ENCODE measurements at regions of chr10 and their contacts with region 1.

Region 1: DNA sequence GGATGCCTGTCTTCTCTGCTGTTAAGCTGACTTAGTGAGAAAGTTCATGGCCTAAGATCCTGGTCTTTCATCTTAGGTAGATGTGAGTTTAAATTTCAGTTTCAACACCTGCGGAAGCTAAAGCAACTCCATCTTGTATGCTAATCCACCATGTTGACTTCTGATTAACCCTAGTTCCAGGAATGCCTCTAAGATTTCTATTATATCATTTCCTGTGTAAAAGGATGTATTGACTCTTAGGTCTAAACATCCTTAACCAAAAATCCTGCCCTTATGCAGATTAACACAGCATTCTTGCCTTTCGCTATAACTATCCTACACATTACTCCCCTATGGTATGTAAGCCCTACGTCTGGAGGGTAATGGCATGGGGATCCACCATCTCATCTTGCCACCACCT is 94.4 kb upstream of the CCDC6 start:
- DNase-seq: peak; percentile 12
- H3K4me3 Mint-ChIP-seq: no peak overlapping the region
- H3K27ac Mint-ChIP-seq: peak overlapping the region; percentile 55
- H3K4me1 Mint-ChIP-seq: peaks cover 18% of the 10 kb centered on the region
- H3K27me3 Mint-ChIP-seq: peaks cover 3% of the 10 kb centered on the region

Region 2: GRCh38 chr10:59606551-59606961 is 394.2 kb before region 1 on chr10:
- CTCF ChIA-PET with region 1: no interaction called
- POLR2A ChIA-PET with region 1: no interaction called
- intact Hi-C with region 1: no loop called
- DNase-seq: no peak
- H3K4me3 Mint-ChIP-seq: no peak overlapping the region
- H3K27ac Mint-ChIP-seq: no peak overlapping the region
- H3K4me1 Mint-ChIP-seq: no peaks in the 10 kb centered on the region
- H3K27me3 Mint-ChIP-seq: peaks cover 2% of the 10 kb centered on the region

Region 3: GRCh38 chr10:59885430-59886134 is 115.2 kb before region 1 on chr10:
- CTCF ChIA-PET with region 1: no interaction called
- POLR2A ChIA-PET with region 1: no interaction called
- intact Hi-C with region 1: loop called (anchors 2 kb)
- DNase-seq: peak; percentile 44
- H3K4me3 Mint-ChIP-seq: no peak overlapping the region
- H3K27ac Mint-ChIP-seq: peak overlapping the region; percentile 96
- H3K4me1 Mint-ChIP-seq: peaks cover 87% of the 10 kb centered on the region
- H3K27me3 Mint-ChIP-seq: no peaks in the 10 kb centered on the region

Region 4: GRCh38 chr10:60016794-60017193 is 16.0 kb after region 1 on chr10:
- CTCF ChIA-PET with region 1: no interaction called
- POLR2A ChIA-PET with region 1: no interaction called
- intact Hi-C with region 1: no loop called
- DNase-seq: no peak
- H3K4me3 Mint-ChIP-seq: no peak overlapping the region
- H3K27ac Mint-ChIP-seq: no peak overlapping the region
- H3K4me1 Mint-ChIP-seq: no peaks in the 10 kb centered on the region
- H3K27me3 Mint-ChIP-seq: peaks cover 8% of the 10 kb centered on the region